ENCODE measurements at regions of chr7 and their contacts with region 1.

Region 1: DNA sequence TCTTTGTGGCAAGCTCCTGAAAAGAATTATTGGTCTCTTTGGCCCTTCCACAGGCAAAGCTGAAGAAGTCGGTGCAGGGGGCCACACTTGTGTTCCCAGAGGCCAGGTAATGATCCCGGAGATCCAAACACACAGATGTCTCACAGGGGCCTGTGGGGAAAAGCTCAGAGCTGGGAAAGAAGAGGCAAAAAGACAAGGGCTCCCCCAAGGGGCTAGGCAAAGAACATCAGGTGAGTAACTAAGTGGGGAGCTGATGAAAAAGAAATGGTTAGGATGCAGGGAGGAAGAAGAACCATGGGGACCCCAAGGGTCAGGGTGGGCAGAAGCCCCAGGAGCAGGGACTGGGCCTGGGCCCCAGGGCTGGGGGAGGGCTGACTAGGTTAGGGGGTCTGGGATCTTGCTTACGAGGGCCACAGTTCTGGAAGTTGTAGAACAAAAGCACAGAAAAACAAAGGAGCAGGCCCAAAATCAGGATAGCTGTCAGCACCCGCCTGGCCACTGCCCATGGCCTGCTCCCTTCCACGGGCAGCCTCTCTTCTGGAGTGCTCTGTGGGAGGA is 1.1 kb downstream of the KEL start:
- DNase-seq: peak; percentile 23
- ATAC-seq: peak; percentile 30
- H3K4me3 Mint-ChIP-seq: no peak overlapping the region
- H3K27ac Mint-ChIP-seq: no peak overlapping the region
- H3K4me1 Mint-ChIP-seq: peaks cover 52% of the 10 kb centered on the region
- H3K27me3 Mint-ChIP-seq: peaks cover 3% of the 10 kb centered on the region; the same call in 1 of the 2 replicates
- CTCF ChIP-seq: no peak; the same call in 1 of the 2 replicates

Region 2: GRCh38 chr7:142866361-142867058 is 94.5 kb before region 1 on chr7:
- CTCF ChIA-PET with region 1: interaction called, 12 read pairs
- POLR2A ChIA-PET with region 1: no interaction called
- DNase-seq: peak; percentile 80
- ATAC-seq: peak; percentile 92
- H3K4me3 Mint-ChIP-seq: no peak overlapping the region
- H3K27ac Mint-ChIP-seq: no peak overlapping the region
- H3K4me1 Mint-ChIP-seq: peaks cover 39% of the 10 kb centered on the region
- H3K27me3 Mint-ChIP-seq: no peaks in the 10 kb centered on the region; the same call in none of the 2 replicates
- CTCF ChIP-seq: peak; percentile 39; the same call in 1 of the 2 replicates

Region 3: GRCh38 chr7:142873281-142873787 is 87.7 kb before region 1 on chr7:
- CTCF ChIA-PET with region 1: interaction called, 20 read pairs
- POLR2A ChIA-PET with region 1: no interaction called
- DNase-seq: peak; percentile 69
- ATAC-seq: peak; percentile 88
- H3K4me3 Mint-ChIP-seq: no peak overlapping the region
- H3K27ac Mint-ChIP-seq: no peak overlapping the region
- H3K4me1 Mint-ChIP-seq: no peaks in the 10 kb centered on the region
- H3K27me3 Mint-ChIP-seq: no peaks in the 10 kb centered on the region
- CTCF ChIP-seq: peak; percentile 90

Region 4: DNA sequence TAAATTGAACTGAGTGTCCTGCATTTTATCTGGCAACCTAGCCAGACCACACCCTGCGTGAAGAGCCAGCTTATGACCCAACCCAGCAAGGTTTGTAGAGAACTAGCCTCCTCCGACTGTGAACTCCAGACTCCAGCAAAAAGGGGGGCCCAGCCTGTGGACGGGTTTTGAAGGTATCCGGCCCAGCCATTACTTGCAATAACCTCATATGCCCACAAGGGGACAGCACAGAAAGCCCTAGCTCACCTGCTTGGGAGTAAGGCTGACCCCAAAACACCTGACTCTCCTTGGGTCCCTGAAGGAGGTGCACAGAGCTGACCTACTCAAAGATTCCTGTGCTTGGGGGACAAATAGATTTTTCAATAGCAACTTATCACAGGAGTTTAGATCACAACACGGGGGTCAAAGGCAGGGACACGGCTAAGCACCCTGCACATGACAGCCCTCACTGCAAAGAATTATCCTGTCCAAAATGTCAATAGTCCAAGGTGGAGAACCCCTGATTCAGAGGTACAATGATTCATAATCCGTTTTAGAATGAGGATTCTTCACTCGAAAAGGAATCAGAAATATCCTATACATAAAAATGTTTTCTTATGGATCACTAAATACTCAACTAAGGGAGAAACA is 80.0 kb before region 1 on chr7:
- CTCF ChIA-PET with region 1: interaction called, 17 read pairs
- POLR2A ChIA-PET with region 1: no interaction called
- DNase-seq: peak; percentile 72
- ATAC-seq: peak; percentile 72
- H3K4me3 Mint-ChIP-seq: no peak overlapping the region
- H3K27ac Mint-ChIP-seq: no peak overlapping the region
- H3K4me1 Mint-ChIP-seq: peaks cover 6% of the 10 kb centered on the region
- H3K27me3 Mint-ChIP-seq: no peaks in the 10 kb centered on the region; the same call in 1 of the 2 replicates
- CTCF ChIP-seq: peak; percentile 96

Region 5: GRCh38 chr7:142898377-142899170 is 62.5 kb before region 1 on chr7:
- CTCF ChIA-PET with region 1: no interaction called
- POLR2A ChIA-PET with region 1: no interaction called
- DNase-seq: no peak
- ATAC-seq: peak; percentile 61
- H3K4me3 Mint-ChIP-seq: no peak overlapping the region
- H3K27ac Mint-ChIP-seq: no peak overlapping the region
- H3K4me1 Mint-ChIP-seq: peaks cover 13% of the 10 kb centered on the region
- H3K27me3 Mint-ChIP-seq: peaks cover 7% of the 10 kb centered on the region
- CTCF ChIP-seq: no peak

Measured in WTC11 (cell line).